ENCODE measurements at regions of chr2 and their contacts with region 1.

Region 1: GRCh38 chr2:121471532-121472469 is 58.9 kb upstream of the RNU4ATAC start:
- DNase-seq: no peak
- H3K4me3 Mint-ChIP-seq: no peak overlapping the region
- H3K27ac Mint-ChIP-seq: no peak overlapping the region
- H3K4me1 Mint-ChIP-seq: peaks cover 25% of the 10 kb centered on the region
- H3K27me3 Mint-ChIP-seq: no peaks in the 10 kb centered on the region

Region 2: DNA sequence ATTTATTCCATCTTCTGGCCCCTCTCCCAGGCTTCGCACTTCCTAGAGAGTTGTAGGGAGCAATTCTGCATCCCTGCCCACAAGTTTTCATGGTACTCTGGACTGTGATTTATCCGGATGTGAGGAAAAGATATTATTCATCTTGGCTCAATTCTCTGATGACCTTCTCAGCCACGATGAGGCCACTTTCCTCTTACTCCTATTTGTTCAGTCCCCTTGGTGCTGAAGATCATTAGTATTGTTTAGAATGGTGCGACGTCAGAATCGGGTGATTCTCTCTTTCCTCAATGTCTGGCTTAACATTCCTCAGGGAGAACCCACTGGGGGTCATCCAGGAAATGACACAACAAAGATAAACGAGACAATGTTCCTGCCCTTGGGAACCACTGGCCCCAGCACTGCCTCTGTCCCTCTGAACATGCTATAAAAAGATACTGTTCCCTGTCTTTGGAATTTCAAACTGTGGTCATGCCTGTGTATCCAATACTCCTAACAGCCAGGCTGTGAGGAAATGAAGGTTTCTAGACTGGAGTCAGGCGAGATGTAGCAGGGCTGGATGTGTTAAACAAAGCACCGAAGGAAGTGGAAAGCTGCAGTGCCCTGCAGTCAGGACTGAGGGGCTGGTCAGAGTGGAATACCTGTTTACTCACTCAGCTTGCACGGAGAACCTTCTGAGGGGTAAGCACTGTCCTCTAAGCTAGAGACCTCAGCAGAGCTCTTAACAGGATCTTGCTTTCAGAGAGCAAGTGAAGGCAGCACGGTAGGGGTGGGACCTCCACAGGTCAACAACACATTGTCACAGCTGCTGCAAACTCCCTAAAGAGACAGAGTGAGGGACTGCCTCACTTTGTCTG is 749.0 kb before region 1 on chr2:
- intact Hi-C with region 1: no loop called
- DNase-seq: no peak
- H3K4me3 Mint-ChIP-seq: no peak overlapping the region
- H3K27ac Mint-ChIP-seq: no peak overlapping the region
- H3K4me1 Mint-ChIP-seq: no peaks in the 10 kb centered on the region
- H3K27me3 Mint-ChIP-seq: peaks cover 8% of the 10 kb centered on the region

Region 3: GRCh38 chr2:121513597-121514333 is 42.0 kb after region 1 on chr2:
- intact Hi-C with region 1: loop called (anchors 5 kb)
- DNase-seq: no peak
- H3K4me3 Mint-ChIP-seq: no peak overlapping the region
- H3K27ac Mint-ChIP-seq: peak overlapping the region; percentile 12
- H3K4me1 Mint-ChIP-seq: peaks cover 8% of the 10 kb centered on the region
- H3K27me3 Mint-ChIP-seq: no peaks in the 10 kb centered on the region